PC-3 (cell line): ENCODE measurements at regions of chr1 and their contacts with region 1.

Region 1: GRCh38 chr1:6727535-6727934 is 25.9 kb upstream of the DNAJC11 start:
- DNase-seq: peak; percentile 88
- ATAC-seq: peak; percentile 83
- H3K4me3 ChIP-seq: no peak overlapping the region
- H3K27ac ChIP-seq: no peak overlapping the region
- H3K4me1 ChIP-seq: peaks cover 6% of the 10 kb centered on the region; the same call in 1 of the 2 replicates
- H3K27me3 ChIP-seq: peaks cover 12% of the 10 kb centered on the region; the same call in 1 of the 2 replicates
- CTCF ChIP-seq: peak; percentile 99

Region 2: DNA sequence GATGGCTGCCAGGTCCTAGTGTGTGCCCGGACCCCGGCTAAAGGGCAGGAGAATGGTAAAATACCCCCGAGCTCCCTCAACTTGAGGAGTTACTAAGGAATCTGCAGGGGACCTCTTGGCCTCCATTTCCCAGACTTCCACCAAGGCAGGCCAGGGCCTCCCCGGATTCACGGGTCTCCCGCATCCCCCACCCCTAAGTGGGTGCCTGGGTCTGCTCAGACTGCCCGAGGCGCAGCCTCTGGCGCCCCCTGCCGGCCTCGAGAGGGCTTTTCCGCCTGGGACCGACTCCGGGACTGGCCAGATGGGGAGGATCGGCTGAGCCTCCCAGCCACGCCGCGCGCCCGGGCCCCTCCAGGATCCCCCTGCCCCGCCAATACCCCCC is 237.7 kb before region 1 on chr1:
- CTCF ChIA-PET with region 1: no interaction called
- POLR2A ChIA-PET with region 1: no interaction called
- intact Hi-C with region 1: no loop called
- DNase-seq: peak; percentile 91
- ATAC-seq: peak; percentile 41
- H3K4me3 ChIP-seq: peak overlapping the region; percentile 89
- H3K27ac ChIP-seq: peak overlapping the region; percentile 97
- H3K4me1 ChIP-seq: peaks cover 51% of the 10 kb centered on the region
- H3K27me3 ChIP-seq: no peaks in the 10 kb centered on the region
- CTCF ChIP-seq: peak; percentile 99

Region 3: DNA sequence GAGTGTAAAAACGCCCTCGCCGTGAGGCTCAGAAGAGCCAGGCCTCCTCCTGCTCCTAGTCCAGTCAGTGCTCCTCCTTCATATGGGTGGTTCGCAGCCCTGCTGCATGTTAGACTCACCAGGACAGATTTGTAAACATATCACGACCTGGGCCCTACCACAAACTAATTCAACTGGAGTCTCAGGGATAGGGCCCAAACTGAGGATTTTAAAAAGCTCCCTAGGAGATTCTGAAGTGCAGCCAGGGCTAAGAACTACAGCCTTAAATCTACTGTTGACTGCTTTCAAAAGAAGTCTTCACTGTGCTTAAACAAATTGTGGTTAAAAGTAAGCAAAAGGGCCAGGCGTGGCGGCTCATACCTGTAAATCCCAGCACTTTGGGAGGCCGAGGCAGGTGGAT is 114.8 kb after region 1 on chr1:
- CTCF ChIA-PET with region 1: no interaction called
- POLR2A ChIA-PET with region 1: no interaction called
- intact Hi-C with region 1: no loop called
- DNase-seq: no peak
- ATAC-seq: no peak
- H3K4me3 ChIP-seq: no peak overlapping the region
- H3K27ac ChIP-seq: no peak overlapping the region
- H3K4me1 ChIP-seq: no peaks in the 10 kb centered on the region
- H3K27me3 ChIP-seq: no peaks in the 10 kb centered on the region
- CTCF ChIP-seq: no peak

Region 4: DNA sequence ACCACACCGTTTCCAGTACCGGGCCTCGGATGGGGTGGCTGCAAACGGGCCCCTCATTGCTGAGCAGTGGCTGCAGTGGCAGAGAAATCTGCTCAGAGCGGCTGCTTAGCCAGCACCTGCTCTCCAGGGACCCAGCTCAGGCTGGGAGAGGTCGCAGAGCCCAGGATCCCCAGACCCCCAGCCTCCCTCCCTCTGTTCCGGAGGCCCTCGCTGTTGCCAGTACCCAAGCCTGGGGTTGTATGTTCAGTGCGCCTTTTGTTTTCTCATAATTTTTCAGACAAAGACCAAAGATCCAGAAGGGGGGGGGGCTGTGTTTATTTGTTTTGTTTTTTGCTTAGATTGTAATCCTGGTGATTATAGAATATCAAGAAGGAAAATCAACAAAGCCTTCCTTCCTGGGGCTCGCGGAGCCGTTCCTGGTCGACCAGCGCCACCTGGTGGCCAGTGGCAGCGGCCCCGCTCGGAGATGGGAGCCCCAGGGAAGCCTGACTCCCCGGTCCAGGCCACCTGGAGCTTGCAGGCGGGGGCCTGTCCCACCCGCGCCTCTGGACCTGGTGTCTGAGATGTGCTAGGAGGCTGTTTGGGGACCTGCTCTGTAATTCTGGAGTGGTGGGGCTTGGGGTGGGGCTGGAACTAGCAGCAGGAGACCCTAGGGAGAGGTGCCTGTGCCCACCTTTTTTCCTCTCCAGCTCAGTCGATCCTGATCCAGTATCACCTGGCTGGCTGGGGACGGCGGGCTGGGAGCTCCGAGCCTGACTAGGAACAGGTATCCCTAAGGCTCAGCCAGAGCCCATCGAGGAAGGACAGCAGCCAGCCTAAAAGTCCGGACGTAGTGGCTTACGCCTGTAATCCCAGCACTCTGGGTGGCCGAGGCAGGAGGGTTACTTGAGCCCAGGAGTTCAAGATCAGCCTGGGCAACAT is 919.7 kb after region 1 on chr1:
- CTCF ChIA-PET with region 1: no interaction called
- POLR2A ChIA-PET with region 1: no interaction called
- intact Hi-C with region 1: loop called (anchors 10 kb)
- DNase-seq: peak; percentile 70
- ATAC-seq: peak; percentile 84
- H3K4me3 ChIP-seq: no peak overlapping the region
- H3K27ac ChIP-seq: no peak overlapping the region
- H3K4me1 ChIP-seq: no peaks in the 10 kb centered on the region
- H3K27me3 ChIP-seq: peaks cover 21% of the 10 kb centered on the region
- CTCF ChIP-seq: peak; percentile 92